Activated T-helper 2 cell treated with anti-CD3 and anti-CD28 coated beads, Interferon-gamma antibody, Interleukin-2, Interleukin-4, amounts not matched to agents 10 μg/mL and 5 μg/mL and 100 μg/mL, durations not matched to agents 14 hours and 24 hours and 36 hours (primary cell): ENCODE measurements at regions of chr2 and their contacts with region 1.

Region 1: GRCh38 chr2:95115418-95115817 is 6.2 kb downstream of the MRPS5 start:
- DNase-seq: peak; percentile 66
- H3K4me3 Mint-ChIP-seq: no peak overlapping the region
- H3K27ac Mint-ChIP-seq: no peak overlapping the region
- H3K4me1 Mint-ChIP-seq: peaks cover 38% of the 10 kb centered on the region
- H3K27me3 Mint-ChIP-seq: no peaks in the 10 kb centered on the region

Region 2: GRCh38 chr2:94986392-94986963 is 128.9 kb before region 1 on chr2:
- intact Hi-C with region 1: loop called (anchors 1 kb)
- DNase-seq: peak; percentile 16
- H3K4me3 Mint-ChIP-seq: no peak overlapping the region
- H3K27ac Mint-ChIP-seq: no peak overlapping the region
- H3K4me1 Mint-ChIP-seq: no peaks in the 10 kb centered on the region
- H3K27me3 Mint-ChIP-seq: peaks cover 11% of the 10 kb centered on the region

Region 3: DNA sequence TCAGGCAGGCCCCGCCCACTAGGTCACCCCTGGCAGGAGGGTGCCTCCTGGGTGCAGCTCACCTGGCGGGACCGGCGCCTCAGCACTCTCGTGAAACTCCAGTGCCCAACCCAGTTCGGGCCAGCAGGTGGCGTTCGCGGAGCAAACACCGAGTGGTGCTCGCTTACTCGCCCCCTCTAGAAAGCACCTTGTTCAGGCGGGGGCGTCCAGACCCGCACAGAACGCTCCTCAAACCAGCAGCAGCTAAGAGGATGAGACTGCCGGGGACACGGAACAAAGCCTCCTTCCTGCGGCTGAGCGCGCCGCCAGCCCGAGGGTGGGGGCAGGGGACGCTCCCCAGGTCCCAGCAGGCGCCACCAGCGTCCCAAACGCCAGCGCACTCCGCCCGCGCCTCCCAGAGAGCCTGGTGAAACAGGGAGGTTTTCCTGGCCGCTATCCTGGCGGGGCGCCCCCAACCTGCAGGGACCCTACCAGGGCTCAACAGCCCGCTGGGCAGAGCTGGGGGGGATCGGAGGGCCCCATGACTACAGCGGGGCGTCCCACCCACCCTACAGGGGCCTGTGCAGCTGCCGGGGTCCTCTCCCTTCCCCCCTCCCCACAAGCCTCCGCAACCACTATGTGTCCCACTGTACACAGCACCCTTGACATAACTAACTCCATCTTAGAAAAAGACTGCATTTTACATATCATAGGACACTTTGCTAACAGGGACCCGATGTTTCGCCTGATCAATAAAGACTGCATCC is 38.5 kb before region 1 on chr2:
- intact Hi-C with region 1: loop called (anchors 1 kb)
- DNase-seq: peak; percentile 86
- H3K4me3 Mint-ChIP-seq: peak overlapping the region; percentile 87
- H3K27ac Mint-ChIP-seq: peak overlapping the region; percentile 95
- H3K4me1 Mint-ChIP-seq: peaks cover 70% of the 10 kb centered on the region
- H3K27me3 Mint-ChIP-seq: no peaks in the 10 kb centered on the region

Region 4: DNA sequence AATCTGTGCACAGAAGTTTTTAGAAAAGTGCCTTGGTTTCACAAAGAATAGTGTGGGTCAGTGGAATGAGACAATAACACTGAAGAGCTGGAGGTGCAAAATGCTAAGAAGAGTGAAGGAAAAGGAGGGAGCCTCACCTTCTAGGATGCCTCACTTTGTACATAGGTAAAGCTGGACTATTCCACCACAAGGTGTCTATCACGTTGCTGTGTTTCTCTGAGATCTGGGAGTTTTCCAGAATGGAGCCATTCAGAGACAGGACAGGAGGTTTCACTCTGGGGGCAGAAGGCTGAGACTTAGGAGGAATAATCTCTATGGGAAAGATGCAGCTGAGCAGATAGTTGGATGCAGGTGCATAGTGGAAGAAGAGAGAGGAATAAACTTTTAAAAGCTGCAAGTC is 453.1 kb after region 1 on chr2:
- intact Hi-C with region 1: no loop called
- DNase-seq: no peak
- H3K4me3 Mint-ChIP-seq: no peak overlapping the region
- H3K27ac Mint-ChIP-seq: no peak overlapping the region
- H3K4me1 Mint-ChIP-seq: no peaks in the 10 kb centered on the region
- H3K27me3 Mint-ChIP-seq: peaks cover 33% of the 10 kb centered on the region